Sigmoid colon (tissue), 7 donors: ENCODE measurements at regions of chr16 and their contacts with region 1.

Region 1: GRCh38 chr16:11915644-11916523 is at the start of gene GSPT1:
- DNase-seq: peak; percentile 99
- H3K4me3 ChIP-seq: peak within 1 kb of the TSS; percentile 71 to 98 (median 90)
- H3K27ac ChIP-seq: peak within 1 kb of the TSS; percentile 95 to 98 (median 97)
- H3K4me1 ChIP-seq: peaks cover 0 to 42% (median 41%) of the 10 kb centered on the region in 4 donors
- H3K27me3 ChIP-seq: no peaks in the 10 kb centered on the region
- CTCF ChIP-seq: peak in 2 of 4 experiments; percentile 15 to 35
- EP300 ChIP-seq: peak in 2 of 4 donors; percentile 53 to 79
- POLR2A ChIP-seq: peak; percentile 81 to 90
- total RNA-seq, gene GSPT1: 51.8 to 73.5 (median 52.3) TPM

Region 2: DNA sequence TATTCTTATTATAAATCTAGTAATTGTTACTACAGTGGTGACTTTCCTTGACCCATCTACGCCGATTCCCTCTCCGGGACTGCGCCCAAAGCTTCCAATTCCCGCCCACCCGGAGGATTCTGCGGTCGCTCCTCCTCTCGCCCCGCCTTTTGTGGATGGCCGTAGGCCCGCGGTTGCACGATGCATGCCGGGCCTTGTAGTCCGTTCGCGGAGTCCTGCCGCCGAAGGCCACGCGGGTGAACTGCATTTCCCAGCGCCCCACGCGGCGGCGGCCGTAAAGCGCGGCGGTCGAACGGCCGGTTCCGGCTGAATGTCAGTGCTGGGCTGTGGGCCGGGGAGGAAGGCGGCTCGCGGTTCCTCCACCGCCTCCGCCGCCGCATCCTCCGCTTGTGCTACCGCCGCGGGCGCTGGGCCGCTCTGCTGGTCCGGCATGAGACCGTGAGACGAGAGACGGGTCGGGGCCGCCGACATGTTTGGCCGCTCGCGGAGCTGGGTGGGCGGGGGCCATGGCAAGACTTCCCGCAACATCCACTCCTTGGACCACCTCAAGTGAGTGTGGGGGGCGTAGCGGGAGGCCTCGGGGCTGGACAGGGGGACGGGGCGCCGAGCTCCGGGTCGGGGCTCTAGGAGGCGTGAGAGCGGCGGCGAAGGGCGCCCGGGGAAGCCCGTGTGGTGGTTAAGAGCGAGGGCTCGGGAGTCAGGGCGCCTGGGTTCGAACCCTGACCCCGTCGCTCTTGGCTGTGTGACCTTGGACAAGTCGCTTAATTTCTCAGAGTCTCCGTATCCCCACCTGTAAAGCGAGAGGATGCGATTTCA is 971.4 kb before region 1 on chr16 and contains the start of gene CLEC16A:
- intact Hi-C with region 1: loop called (anchors 5 kb)
- DNase-seq: peak; percentile 99
- H3K4me3 ChIP-seq: peak within 1 kb of the TSS; percentile 81 to 98 (median 91)
- H3K27ac ChIP-seq: peak within 1 kb of the TSS; percentile 89 to 92 (median 90)
- H3K4me1 ChIP-seq: peaks cover 0 to 72% (median 57%) of the 10 kb centered on the region in 4 donors
- H3K27me3 ChIP-seq: no peaks in the 10 kb centered on the region
- CTCF ChIP-seq: peak in 1 of 4 experiments; percentile 7
- EP300 ChIP-seq: no peak
- POLR2A ChIP-seq: peak; percentile 50 to 53
- total RNA-seq, gene CLEC16A: 21.3 to 35.2 (median 29.5) TPM

Region 3: DNA sequence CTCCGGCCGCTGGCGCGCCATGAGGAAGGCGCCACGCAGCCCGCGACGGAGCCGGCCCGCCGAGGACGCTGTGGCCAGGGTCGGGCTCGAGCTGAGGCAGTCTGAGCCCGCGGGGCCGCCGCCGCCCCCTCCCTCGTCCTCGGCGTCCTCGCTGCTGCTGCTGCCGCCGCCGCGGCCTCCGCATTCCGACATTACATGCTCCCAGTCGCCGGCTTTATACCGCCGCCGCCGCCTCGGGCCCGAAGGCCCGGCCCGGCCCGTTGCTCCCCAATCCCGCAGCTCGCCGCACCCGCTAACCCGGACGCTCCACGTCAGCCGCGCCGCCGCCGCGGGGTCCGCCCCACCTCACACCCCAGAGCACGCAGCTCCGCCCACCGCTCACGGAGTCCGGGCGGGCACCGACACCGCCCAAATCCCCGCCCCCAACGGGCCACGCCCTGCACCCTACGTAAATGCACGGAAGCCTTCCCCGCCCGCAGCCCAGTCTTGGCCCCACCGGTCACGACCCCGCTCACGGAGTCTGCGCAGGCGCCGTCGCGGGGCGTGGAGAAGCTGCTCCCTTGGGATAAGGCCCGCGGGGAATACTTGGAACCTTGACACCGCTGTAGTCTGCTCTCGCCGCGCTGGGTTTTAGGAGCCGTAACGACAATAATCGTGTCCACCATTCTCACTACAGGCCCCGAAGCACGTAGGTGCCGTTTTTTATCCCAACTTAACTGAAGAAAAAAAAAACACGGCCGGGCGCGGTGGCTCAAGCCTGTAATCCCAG is 173.2 kb before region 1 on chr16 and contains the start of gene TXNDC11:
- intact Hi-C with region 1: loop called (anchors 5 kb)
- DNase-seq: peak; percentile 100
- H3K4me3 ChIP-seq: peak within 1 kb of the TSS; percentile 72 to 99 (median 92)
- H3K27ac ChIP-seq: peak within 1 kb of the TSS; percentile 96 to 100 (median 98)
- H3K4me1 ChIP-seq: peaks cover 0 to 41% (median 34%) of the 10 kb centered on the region in 4 donors
- H3K27me3 ChIP-seq: no peaks in the 10 kb centered on the region
- CTCF ChIP-seq: no peak
- EP300 ChIP-seq: peak in 2 of 4 donors; percentile 40 to 91
- POLR2A ChIP-seq: peak; percentile 65 to 74
- total RNA-seq, gene TXNDC11: 25.3 to 35.2 (median 28.8) TPM

Region 4: DNA sequence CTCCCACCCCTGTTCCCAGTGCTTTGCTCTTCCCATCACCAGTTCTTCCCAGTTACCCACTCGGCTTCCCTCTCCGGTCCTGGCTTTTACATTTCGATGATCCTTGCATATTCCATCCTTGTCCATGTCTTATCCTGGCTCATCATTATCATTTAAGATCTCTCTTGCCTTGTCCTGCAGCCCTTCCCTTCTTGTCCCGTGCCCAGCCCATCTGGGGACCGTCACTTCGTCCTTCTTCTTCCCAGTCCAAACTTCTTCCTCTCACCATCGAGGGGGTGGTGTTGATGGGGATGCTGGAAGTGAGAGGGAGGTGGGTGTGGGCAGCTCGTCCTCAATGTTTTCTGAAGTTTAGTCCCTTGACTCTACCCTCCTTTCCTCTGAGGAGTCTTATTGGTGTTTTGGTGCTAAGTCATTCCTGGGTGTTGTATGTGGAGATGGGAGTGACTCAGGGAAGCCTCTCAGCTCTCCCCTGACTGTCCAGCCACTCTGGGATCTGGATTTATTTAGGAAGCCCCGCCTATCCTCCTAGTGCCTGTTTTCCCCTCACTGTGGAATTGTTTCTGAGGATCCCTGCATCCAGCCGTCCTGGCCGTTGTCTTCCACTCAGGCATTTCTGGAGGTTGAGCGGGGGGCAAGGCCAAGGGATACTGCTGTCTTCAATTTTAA is 61.6 kb after region 1 on chr16:
- intact Hi-C with region 1: loop called (anchors 2 kb)
- DNase-seq: peak; percentile 80
- H3K4me3 ChIP-seq: peak overlapping the region; percentile 76 to 98 (median 92)
- H3K27ac ChIP-seq: peak overlapping the region; percentile 82 to 92 (median 90)
- H3K4me1 ChIP-seq: peaks cover 0 to 29% (median 23%) of the 10 kb centered on the region in 4 donors
- H3K27me3 ChIP-seq: no peaks in the 10 kb centered on the region
- CTCF ChIP-seq: no peak
- EP300 ChIP-seq: no peak
- POLR2A ChIP-seq: no peak